Gastrocnemius medialis (tissue), 4 donors: ENCODE measurements at regions of chr7 and their contacts with region 1.

Region 1: GRCh38 chr7:25656581-25657026 is 428.3 kb upstream of the NPVF start:
- DNase-seq: no peak
- ATAC-seq: no peak
- H3K4me3 ChIP-seq: no peak overlapping the region
- H3K27ac ChIP-seq: no peak overlapping the region
- H3K4me1 ChIP-seq: peaks cover 0 to 19% of the 10 kb centered on the region in 2 donors
- H3K27me3 ChIP-seq: no peaks in the 10 kb centered on the region
- CTCF ChIP-seq: no peak
- POLR2A ChIP-seq: no peak

Region 2: GRCh38 chr7:25578991-25579777 is 77.4 kb before region 1 on chr7:
- in situ Hi-C with region 1: no loop called
- intact Hi-C with region 1: loop called (anchors 10 kb)
- DNase-seq: no peak
- ATAC-seq: no peak
- H3K4me3 ChIP-seq: no peak overlapping the region
- H3K27ac ChIP-seq: no peak overlapping the region
- H3K4me1 ChIP-seq: no peaks in the 10 kb centered on the region
- H3K27me3 ChIP-seq: no peaks in the 10 kb centered on the region
- CTCF ChIP-seq: no peak
- POLR2A ChIP-seq: no peak

Region 3: GRCh38 chr7:25686493-25686892 is 29.9 kb after region 1 on chr7:
- in situ Hi-C with region 1: no loop called
- intact Hi-C with region 1: no loop called
- DNase-seq: no peak
- ATAC-seq: no peak
- H3K4me3 ChIP-seq: no peak overlapping the region
- H3K27ac ChIP-seq: no peak overlapping the region
- H3K4me1 ChIP-seq: no peaks in the 10 kb centered on the region
- H3K27me3 ChIP-seq: no peaks in the 10 kb centered on the region
- CTCF ChIP-seq: no peak
- POLR2A ChIP-seq: no peak

Region 4: GRCh38 chr7:25735674-25736242 is 79.2 kb after region 1 on chr7:
- in situ Hi-C with region 1: no loop called
- intact Hi-C with region 1: no loop called
- DNase-seq: no peak
- ATAC-seq: no peak
- H3K4me3 ChIP-seq: no peak overlapping the region
- H3K27ac ChIP-seq: no peak overlapping the region
- H3K4me1 ChIP-seq: no peaks in the 10 kb centered on the region
- H3K27me3 ChIP-seq: no peaks in the 10 kb centered on the region
- CTCF ChIP-seq: no peak
- POLR2A ChIP-seq: no peak